T-cell (primary cell): ENCODE measurements at regions of chr17 and their contacts with region 1.

Region 1: GRCh38 chr17:1882836-1883235 is 53.0 kb downstream of the RPA1 start:
- DNase-seq: peak in 11 of 35 experiments; percentile 1 to 57 (median 17)
- ATAC-seq: peak in 1 of 4 experiments; percentile 46
- H3K4me3 ChIP-seq: no peak overlapping the region
- H3K4me3 Mint-ChIP-seq: no peak overlapping the region
- H3K27ac ChIP-seq: no peak overlapping the region
- H3K27ac Mint-ChIP-seq: no peak overlapping the region
- H3K4me1 ChIP-seq: no peaks in the 10 kb centered on the region
- H3K4me1 Mint-ChIP-seq: peaks cover 0 to 6% (median 4%) of the 10 kb centered on the region in 3 donors
- H3K27me3 ChIP-seq: no peaks in the 10 kb centered on the region
- H3K27me3 Mint-ChIP-seq: no peaks in the 10 kb centered on the region

Region 2: DNA sequence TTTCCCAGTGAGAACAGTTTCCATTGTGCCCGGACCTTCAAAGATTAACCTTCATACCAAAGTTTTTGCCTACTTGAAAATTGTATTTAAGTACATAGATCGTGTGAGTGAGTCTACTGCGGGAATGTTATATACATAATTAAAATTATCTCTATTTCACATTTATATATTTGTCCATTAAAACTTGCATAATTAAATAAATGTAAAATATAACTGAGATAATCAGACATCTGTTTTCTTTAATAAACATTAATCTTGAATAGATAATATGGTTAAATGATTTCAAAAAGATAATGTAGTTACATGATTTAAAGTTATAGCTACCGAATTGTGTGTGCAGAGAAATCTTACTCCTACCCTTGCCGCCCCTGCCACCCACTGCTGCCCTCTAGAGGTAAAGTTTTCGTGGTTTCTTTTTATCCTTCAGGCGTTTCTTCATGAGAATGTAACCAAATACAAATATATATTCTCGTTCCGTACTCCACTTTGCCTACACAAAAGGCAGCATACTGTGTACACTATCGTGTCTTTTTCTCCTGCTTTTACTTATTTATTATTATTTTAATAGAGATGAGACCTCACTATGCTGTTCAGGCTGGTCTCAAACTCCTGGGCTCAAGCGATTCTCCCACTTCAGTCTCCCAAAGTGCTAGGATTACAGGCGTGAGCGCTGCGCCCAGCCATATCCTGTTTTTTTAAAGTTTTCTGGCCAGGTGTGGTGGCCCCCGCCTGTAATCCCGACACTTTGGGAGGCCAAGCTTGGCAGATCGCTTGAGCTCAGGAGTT is 17.4 kb before region 1 on chr17:
- CTCF ChIA-PET with region 1: interaction called, 3 to 10 read pairs
- POLR2A ChIA-PET with region 1: no interaction called
- DNase-seq: peak in 33 of 35 experiments; percentile 12 to 80 (median 43)
- ATAC-seq: peak; percentile 43 to 65 (median 52)
- H3K4me3 ChIP-seq: no peak overlapping the region
- H3K4me3 Mint-ChIP-seq: no peak overlapping the region
- H3K27ac ChIP-seq: no peak overlapping the region
- H3K27ac Mint-ChIP-seq: no peak overlapping the region
- H3K4me1 ChIP-seq: peaks cover 7 to 9% of the 10 kb centered on the region in 2 experiments
- H3K4me1 Mint-ChIP-seq: peaks cover 13 to 26% (median 22%) of the 10 kb centered on the region in 3 donors
- H3K27me3 ChIP-seq: no peaks in the 10 kb centered on the region
- H3K27me3 Mint-ChIP-seq: no peaks in the 10 kb centered on the region